Activated CD4-positive, alpha-beta memory T cell treated with anti-CD3 and anti-CD28 coated beads for 36 hours (primary cell): ENCODE measurements at regions of chr2 and their contacts with region 1.

Region 1: GRCh38 chr2:42810121-42810970 is 18.0 kb upstream of the HAAO start:
- DNase-seq: peak; percentile 97
- H3K4me3 Mint-ChIP-seq: peak overlapping the region; percentile 95
- H3K27ac Mint-ChIP-seq: peak overlapping the region; percentile 100
- H3K4me1 Mint-ChIP-seq: peaks cover 12% of the 10 kb centered on the region
- H3K27me3 Mint-ChIP-seq: peaks cover 4% of the 10 kb centered on the region

Region 2: DNA sequence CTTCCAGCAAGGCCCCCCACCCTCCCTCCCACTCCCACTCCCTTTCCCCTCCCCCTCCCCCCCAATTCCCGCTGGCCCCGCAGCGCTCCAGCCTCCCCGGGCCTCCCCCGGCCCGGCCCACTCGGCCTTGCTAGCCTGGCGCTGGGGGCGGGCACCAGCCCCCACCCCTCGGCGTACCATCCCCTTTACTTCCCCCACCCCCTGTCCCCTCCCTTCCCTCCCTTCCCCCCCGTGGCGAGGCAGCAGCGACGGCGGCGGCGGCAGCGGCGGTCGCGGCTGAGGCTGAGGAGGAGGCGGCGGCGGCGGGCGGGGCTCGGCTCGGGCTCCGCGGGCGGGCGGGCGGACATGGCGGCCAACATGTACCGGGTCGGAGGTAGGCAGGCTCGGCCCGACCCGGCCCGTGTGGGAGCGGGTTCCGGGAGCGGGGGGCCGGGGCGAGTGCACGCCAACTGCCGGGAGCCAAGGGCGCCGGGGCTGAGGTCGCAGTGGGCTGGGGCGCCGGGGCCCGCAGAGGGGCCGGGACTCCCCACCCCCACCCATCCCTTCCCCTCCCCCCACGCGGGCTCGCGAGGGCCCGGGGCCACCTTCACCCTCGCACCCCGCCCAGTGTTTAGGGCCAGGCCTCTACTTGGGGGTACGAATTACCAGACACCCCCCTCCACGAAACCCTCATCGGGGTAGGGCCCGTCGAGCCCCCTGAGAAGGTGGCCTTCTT is 241.8 kb before region 1 on chr2 and contains the start of gene MTA3:
- CTCF ChIA-PET with region 1: no interaction called
- POLR2A ChIA-PET with region 1: no interaction called
- intact Hi-C with region 1: loop called (anchors 5 kb)
- DNase-seq: peak; percentile 73
- H3K4me3 Mint-ChIP-seq: peak within 1 kb of the TSS; percentile 79
- H3K27ac Mint-ChIP-seq: peak within 1 kb of the TSS; percentile 82
- H3K4me1 Mint-ChIP-seq: peaks cover 10% of the 10 kb centered on the region
- H3K27me3 Mint-ChIP-seq: no peaks in the 10 kb centered on the region
- total RNA-seq, gene MTA3: 25.1 to 29.7 TPM

Region 3: DNA sequence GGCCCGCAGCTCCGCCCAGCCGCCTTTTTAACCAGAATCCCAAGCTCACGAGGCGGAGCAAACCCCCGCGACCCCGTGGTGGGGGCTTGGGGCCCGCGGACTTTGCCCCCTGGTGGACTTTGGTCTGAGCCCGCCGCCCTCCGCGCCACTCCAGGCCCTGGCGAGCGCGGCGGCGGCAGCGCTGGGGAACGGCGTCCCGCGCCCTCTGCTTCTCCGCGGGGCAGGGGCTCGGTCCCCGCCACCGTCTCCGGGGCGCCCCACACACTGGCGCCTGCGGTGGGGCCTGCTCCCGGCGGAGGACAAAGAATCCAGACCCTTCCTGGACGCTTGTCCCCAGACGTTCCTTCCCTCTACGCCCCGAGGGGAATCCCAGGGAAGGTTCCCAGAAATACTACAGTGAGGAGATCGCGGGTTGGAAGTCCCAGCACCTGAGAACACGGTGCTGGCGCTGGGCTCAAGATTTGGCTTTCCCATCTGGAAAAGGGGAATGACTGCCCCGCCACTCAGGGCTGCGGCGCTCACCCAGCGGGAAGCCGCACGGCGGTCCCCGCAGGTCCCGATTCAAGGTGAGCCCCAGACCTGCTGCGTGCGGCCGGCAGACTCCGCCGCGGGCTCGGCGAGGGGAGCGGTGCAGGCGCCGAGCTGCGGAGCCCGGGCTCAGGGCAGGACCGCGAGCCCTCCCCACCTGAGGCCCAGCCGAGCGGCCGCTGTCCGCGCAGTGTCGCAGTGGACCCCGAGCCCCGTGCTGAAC is 17.6 kb before region 1 on chr2 and contains the start of gene HAAO:
- CTCF ChIA-PET with region 1: interaction called, 5 read pairs
- POLR2A ChIA-PET with region 1: interaction called, 19 read pairs
- intact Hi-C with region 1: no loop called
- DNase-seq: no peak
- H3K4me3 Mint-ChIP-seq: peak within 1 kb of the TSS; percentile 60
- H3K27ac Mint-ChIP-seq: no peak within 1 kb of the TSS
- H3K4me1 Mint-ChIP-seq: peaks cover 20% of the 10 kb centered on the region
- H3K27me3 Mint-ChIP-seq: peaks cover 53% of the 10 kb centered on the region
- total RNA-seq, gene HAAO: 0.17 TPM in 1 of 2 experiments, not detected in the other

Region 4: DNA sequence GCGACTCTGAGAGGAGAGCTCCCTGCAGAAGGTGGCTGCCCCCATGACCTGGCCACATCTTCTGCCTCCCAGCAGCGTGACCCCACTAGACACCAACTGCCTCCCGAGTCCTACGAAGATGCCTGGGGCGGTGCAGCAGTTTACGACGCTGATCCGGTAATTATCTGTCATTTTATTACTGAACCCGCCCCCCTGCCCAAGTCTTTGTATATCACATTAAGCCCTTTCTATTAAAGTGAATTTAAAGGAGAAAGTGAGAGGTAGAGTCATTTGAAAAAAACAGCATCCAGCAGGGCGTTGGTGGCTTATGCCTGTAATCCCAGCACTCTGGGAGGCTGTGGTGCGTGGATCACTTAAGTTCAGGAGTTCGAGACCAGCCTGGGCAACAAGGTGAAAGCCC is 1061.8 kb after region 1 on chr2:
- CTCF ChIA-PET with region 1: no interaction called
- POLR2A ChIA-PET with region 1: no interaction called
- intact Hi-C with region 1: no loop called
- DNase-seq: no peak
- H3K4me3 Mint-ChIP-seq: no peak overlapping the region
- H3K27ac Mint-ChIP-seq: no peak overlapping the region
- H3K4me1 Mint-ChIP-seq: no peaks in the 10 kb centered on the region
- H3K27me3 Mint-ChIP-seq: peaks cover 30% of the 10 kb centered on the region